ENCODE measurements at regions of chr7 and their contacts with region 1.

Region 1: GRCh38 chr7:28921822-28922221 is 36.3 kb downstream of the TRIL start:
- DNase-seq: peak; percentile 67
- H3K4me3 Mint-ChIP-seq: no peak overlapping the region
- H3K27ac Mint-ChIP-seq: no peak overlapping the region
- H3K4me1 Mint-ChIP-seq: peaks cover 19% of the 10 kb centered on the region
- H3K27me3 Mint-ChIP-seq: no peaks in the 10 kb centered on the region
- CTCF ChIP-seq: peak; percentile 95

Region 2: GRCh38 chr7:28298870-28299518 is 622.8 kb before region 1 on chr7:
- CTCF ChIA-PET with region 1: interaction called, 4 read pairs
- intact Hi-C with region 1: loop called (anchors 5 kb)
- DNase-seq: peak; percentile 74
- H3K4me3 Mint-ChIP-seq: no peak overlapping the region
- H3K27ac Mint-ChIP-seq: no peak overlapping the region
- H3K4me1 Mint-ChIP-seq: no peaks in the 10 kb centered on the region
- H3K27me3 Mint-ChIP-seq: no peaks in the 10 kb centered on the region
- CTCF ChIP-seq: peak; percentile 67

Region 3: DNA sequence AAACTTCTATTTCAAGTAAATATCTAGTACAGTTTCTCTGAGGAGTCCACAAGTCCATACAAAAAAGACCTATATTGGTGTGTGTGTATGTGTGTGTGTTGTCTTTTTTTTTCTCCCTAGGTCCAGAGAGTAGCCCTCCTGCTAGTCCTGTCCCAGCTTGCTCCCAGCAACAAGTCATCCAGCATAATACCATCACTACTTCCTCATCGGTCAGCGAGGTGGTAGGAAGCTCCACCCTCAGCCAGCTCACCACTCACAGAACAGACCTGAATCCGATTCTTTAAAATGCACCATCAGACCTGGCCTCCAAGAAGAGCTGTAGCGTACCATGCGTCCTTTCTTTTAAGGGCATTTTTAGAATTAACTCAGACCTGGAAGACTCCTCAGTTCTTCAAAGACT is 102.8 kb before region 1 on chr7:
- CTCF ChIA-PET with region 1: no interaction called
- intact Hi-C with region 1: no loop called
- DNase-seq: no peak
- H3K4me3 Mint-ChIP-seq: no peak overlapping the region
- H3K27ac Mint-ChIP-seq: no peak overlapping the region
- H3K4me1 Mint-ChIP-seq: no peaks in the 10 kb centered on the region
- H3K27me3 Mint-ChIP-seq: no peaks in the 10 kb centered on the region
- CTCF ChIP-seq: no peak

Region 4: GRCh38 chr7:28939844-28940544 is 18.2 kb after region 1 on chr7:
- CTCF ChIA-PET with region 1: interaction called, 11 read pairs
- intact Hi-C with region 1: no loop called
- DNase-seq: no peak
- H3K4me3 Mint-ChIP-seq: no peak overlapping the region
- H3K27ac Mint-ChIP-seq: no peak overlapping the region
- H3K4me1 Mint-ChIP-seq: no peaks in the 10 kb centered on the region
- H3K27me3 Mint-ChIP-seq: no peaks in the 10 kb centered on the region
- CTCF ChIP-seq: no peak

Region 5: DNA sequence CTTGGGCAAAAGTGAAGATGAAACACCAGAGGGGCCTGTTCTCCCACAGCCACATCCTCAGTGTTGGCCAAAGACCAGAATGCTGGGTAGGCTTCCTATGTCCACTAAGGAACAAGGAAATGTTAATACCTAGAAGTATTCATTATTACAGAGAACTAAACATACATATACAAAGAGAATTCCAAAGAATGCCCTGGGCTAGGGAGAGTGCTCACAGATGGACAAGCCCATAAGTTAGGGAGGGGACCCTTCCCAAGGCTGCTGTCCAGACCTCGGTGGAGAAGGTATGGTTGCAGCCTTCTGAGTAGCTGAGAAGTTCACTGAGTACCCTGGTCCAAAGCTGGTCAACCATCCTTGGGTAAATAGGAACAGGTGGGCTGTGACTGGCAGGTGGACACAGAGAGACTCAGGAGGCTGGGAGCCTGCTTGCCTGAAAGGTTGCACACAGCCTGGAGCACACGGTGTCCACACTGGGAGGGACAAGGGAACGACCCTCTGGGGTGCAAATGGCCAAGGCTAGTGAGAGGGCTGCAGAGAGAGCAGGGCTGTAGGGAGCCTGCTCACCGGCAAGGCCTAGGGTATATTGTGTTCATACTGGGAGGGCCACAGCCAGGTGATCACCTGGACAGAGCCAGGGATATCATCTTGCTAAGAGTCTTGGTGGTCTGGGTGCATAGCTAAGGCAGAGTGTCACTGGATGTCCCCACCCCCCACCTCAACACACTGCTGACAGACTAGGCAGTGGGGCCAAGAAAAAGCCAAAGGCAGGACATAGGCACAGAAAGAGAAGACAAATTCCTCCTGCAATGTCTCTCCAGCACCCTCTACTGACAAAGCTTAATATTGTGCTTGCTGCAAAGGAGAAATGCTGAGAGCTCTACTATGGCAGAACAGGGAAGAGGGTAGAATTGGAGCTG is 184.2 kb after region 1 on chr7:
- CTCF ChIA-PET with region 1: interaction called, 174 read pairs
- intact Hi-C with region 1: loop called (anchors 1 kb)
- DNase-seq: peak; percentile 75
- H3K4me3 Mint-ChIP-seq: no peak overlapping the region
- H3K27ac Mint-ChIP-seq: no peak overlapping the region
- H3K4me1 Mint-ChIP-seq: peaks cover 37% of the 10 kb centered on the region
- H3K27me3 Mint-ChIP-seq: no peaks in the 10 kb centered on the region
- CTCF ChIP-seq: peak; percentile 86

Region 6: GRCh38 chr7:29189743-29190201 is 267.9 kb after region 1 on chr7:
- CTCF ChIA-PET with region 1: interaction called, 9 read pairs
- intact Hi-C with region 1: loop called (anchors 5 kb)
- DNase-seq: peak; percentile 86
- H3K4me3 Mint-ChIP-seq: no peak overlapping the region
- H3K27ac Mint-ChIP-seq: no peak overlapping the region
- H3K4me1 Mint-ChIP-seq: peaks cover 18% of the 10 kb centered on the region
- H3K27me3 Mint-ChIP-seq: peaks cover 14% of the 10 kb centered on the region
- CTCF ChIP-seq: peak; percentile 97

Region 7: DNA sequence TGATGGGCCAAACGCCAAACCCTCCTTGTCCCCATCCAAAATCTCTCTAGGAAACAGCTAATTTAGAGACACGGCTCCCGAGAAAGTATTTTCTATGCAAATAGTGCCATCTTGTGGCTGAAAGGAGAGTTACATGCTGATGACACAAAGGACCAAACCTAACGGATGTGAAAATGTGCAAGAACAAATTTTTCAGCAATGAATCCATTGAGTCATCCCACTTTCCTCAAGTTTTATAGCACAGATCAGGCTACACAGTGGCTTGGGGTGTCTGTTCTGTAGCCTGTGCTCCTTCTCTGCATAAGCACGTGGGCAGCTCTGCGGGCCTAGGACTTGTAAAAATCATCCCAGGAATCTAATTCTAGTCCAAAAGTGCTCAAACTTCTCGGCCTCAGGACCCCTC is 487.0 kb after region 1 on chr7:
- CTCF ChIA-PET with region 1: interaction called, 37 read pairs
- intact Hi-C with region 1: loop called (anchors 1 kb)
- DNase-seq: peak; percentile 79
- H3K4me3 Mint-ChIP-seq: no peak overlapping the region
- H3K27ac Mint-ChIP-seq: no peak overlapping the region
- H3K4me1 Mint-ChIP-seq: peaks cover 13% of the 10 kb centered on the region
- H3K27me3 Mint-ChIP-seq: no peaks in the 10 kb centered on the region
- CTCF ChIP-seq: peak; percentile 89

Measured in Calu3 (cell line).